ENCODE measurements at regions of chr9 and their contacts with region 1.

Region 1: DNA sequence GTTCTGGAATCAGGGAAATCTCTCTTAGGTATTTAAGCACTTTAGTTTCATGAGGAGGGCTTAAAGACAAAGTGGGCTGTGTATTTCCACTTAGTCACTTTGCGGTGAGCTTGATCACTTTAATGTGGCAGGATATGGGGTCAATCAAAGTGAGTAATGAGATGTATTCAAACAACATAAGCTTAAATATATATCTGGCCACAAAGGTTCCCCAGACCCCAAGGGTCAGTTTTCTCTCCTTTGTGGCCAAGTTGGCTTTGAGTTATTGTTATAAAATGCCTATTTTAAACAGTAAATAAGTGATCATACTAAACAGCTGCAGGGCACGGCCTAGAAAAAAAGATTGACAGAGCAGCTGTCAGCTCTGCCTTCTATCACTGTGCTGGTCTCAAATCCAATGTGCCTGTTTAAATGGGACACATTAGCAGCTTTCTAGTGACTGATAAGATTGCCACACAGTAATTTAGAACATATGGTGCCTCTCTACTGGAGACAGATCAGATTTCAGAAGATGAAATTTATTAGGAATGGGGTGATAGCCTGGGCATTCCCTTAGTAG is 363.9 kb downstream of the AGTPBP1 start:
- DNase-seq: no peak

Region 2: DNA sequence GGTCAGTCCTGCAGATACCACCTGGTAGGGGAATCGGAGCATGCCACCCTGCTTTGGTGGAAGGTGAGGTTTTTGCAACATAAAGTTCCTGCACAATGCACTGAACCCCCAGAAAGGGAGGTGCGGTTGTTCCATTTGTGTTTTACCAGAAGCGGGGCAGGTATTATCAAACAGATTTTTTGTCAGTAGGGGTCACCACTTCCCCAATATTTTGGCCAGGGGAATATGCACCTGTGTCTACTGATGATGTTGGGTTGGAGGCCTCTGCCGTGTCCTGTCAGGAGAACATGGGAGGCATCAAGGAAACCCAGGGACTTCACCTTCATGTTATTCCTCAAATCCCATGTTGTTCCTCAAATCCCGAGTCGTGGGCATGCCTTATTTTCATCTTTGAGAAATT is 269.6 kb before region 1 on chr9:
- intact Hi-C with region 1: loop called (anchors 5 kb)
- DNase-seq: no peak

Measured in cardiac septum (tissue), 1 donor.